Activated CD4-positive, alpha-beta T cell treated with anti-CD3 and anti-CD28 coated beads for 36 hours (primary cell): ENCODE measurements at regions of chr15 and their contacts with region 1.

Region 1: DNA sequence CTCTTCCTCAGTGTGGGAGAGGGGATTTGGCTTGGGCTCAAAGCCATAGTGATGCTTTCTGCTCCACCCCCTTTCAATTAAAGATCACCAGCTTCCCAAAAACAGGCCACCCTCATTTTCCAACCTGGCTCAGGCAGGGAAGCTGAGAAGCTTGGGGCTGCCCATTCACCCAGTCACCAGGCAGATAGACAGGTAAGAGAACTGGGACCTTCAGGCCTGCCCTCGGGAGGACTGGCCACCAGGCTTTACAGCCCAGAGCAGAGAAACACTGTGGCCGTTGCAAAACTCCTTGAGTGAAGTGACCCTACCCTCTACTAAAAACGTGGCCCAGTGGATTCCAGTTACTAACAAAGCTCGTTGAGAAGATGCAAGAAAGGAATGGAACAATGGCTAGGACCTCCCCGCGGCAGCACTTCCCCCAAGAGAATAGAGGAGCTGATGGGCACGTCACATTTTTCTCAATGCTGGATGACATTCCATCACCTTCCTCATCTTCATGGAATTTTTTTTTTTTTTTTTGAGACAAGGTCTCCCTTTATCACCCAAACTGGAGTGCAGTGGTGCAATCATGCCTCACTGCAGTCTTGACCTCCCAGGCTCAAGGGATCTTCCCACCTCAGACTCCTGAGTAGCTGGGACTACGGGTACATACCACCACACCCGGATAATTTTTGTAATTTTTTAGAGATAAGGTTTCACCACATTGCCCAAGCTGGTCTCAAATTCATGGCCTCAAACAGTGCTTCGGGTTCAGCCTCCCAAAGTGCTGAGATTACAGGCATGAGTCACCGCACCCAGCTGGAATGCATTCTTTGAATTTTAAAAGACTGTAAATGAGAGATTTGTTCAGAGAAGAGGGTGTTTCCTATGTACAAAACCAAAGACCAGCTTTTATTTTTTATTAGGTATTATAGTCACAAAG is 37.9 kb downstream of the LIPC start:
- DNase-seq: no peak
- ATAC-seq: no peak
- H3K4me3 Mint-ChIP-seq: no peak overlapping the region
- H3K27ac Mint-ChIP-seq: no peak overlapping the region
- H3K4me1 Mint-ChIP-seq: peaks cover 35% of the 10 kb centered on the region
- H3K27me3 Mint-ChIP-seq: no peaks in the 10 kb centered on the region

Region 2: DNA sequence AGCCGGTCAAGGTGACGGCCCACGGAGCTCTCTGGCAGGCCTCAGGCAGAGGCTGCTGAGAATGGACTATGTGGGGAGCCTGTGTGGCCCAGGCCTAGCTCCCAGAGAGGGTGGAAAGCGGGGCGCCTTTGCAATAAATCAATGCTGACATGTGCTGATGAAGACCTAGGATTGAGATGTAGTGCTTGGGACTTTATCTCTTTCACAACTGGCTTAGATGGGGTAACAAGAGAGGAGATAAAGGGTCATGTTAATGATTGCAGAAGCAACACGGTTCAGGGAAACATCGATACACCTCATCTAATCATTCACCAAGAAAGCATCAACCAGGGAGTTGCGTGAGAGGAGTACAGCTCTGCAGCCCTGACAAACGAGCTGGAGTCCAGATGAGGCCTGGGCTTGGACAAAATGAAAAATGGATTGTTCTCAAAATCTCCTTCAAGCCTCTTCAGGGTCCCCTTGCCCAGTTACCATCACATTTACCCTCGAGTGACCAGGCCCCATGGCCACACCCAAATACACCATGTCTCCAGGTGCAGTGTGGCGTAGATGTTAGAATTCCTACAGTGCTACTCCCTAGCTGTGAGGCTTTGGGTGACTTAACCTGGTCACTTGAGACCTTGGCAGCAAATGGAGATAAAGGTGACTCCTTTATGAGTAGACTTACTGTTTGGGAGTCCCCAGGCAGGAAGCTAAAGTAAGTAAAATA is 184.3 kb before region 1 on chr15:
- CTCF ChIA-PET with region 1: no interaction called
- POLR2A ChIA-PET with region 1: no interaction called
- intact Hi-C with region 1: loop called in 1 of 2 experiments (anchors 5 kb)
- DNase-seq: no peak
- ATAC-seq: no peak
- H3K4me3 Mint-ChIP-seq: no peak overlapping the region
- H3K27ac Mint-ChIP-seq: no peak overlapping the region
- H3K4me1 Mint-ChIP-seq: peaks cover 9% of the 10 kb centered on the region
- H3K27me3 Mint-ChIP-seq: peaks cover 1% of the 10 kb centered on the region

Region 3: DNA sequence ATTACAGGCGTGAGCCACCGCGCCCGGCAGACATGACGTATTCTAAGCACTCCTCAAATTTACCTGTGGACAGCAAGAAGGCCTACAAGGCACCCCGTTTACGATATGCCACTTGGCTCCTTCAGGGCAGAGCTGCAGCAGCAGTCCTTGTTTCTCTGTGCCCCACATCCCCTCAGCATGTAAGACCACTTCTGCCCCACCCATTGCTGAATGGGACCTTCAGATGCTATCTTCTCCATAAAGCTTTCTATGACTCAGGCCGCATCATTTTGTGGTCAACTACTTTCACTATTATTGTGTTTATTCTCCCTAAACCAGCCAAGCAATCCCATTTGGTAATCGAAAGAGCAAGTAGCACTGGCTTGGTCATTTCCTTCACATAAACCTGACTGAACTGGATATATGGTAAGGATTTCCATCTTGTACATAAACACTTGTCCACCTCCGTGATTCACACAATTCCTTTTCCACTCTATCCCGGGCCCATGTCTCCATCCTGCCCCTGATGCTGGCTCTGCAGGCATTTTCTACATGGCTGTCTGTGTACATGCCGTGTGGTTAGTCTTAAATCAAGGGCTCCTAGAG is 12.2 kb before region 1 on chr15:
- CTCF ChIA-PET with region 1: interaction called, 9 read pairs
- POLR2A ChIA-PET with region 1: interaction called, 3 read pairs
- intact Hi-C with region 1: loop called in 1 of 2 experiments (anchors 2 kb)
- DNase-seq: peak; percentile 55
- ATAC-seq: peak; percentile 68
- H3K4me3 Mint-ChIP-seq: no peak overlapping the region
- H3K27ac Mint-ChIP-seq: peak overlapping the region; percentile 24
- H3K4me1 Mint-ChIP-seq: peaks cover 53% of the 10 kb centered on the region
- H3K27me3 Mint-ChIP-seq: no peaks in the 10 kb centered on the region

Region 4: GRCh38 chr15:58517682-58518525 is 48.2 kb after region 1 on chr15:
- CTCF ChIA-PET with region 1: no interaction called
- POLR2A ChIA-PET with region 1: no interaction called
- intact Hi-C with region 1: loop called in 1 of 2 experiments (anchors 2 kb)
- DNase-seq: peak; percentile 35
- ATAC-seq: peak; percentile 17
- H3K4me3 Mint-ChIP-seq: no peak overlapping the region
- H3K27ac Mint-ChIP-seq: peak overlapping the region; percentile 40
- H3K4me1 Mint-ChIP-seq: peaks cover 51% of the 10 kb centered on the region
- H3K27me3 Mint-ChIP-seq: peaks cover 3% of the 10 kb centered on the region

Region 5: GRCh38 chr15:59131969-59132562 is 662.4 kb after region 1 on chr15:
- CTCF ChIA-PET with region 1: no interaction called
- POLR2A ChIA-PET with region 1: no interaction called
- intact Hi-C with region 1: no loop called
- DNase-seq: no peak
- ATAC-seq: no peak
- H3K4me3 Mint-ChIP-seq: no peak overlapping the region
- H3K27ac Mint-ChIP-seq: no peak overlapping the region
- H3K4me1 Mint-ChIP-seq: peaks cover under 1% of the 10 kb centered on the region
- H3K27me3 Mint-ChIP-seq: no peaks in the 10 kb centered on the region